ENCODE measurements at regions of chr2 and their contacts with region 1.

Region 1: DNA sequence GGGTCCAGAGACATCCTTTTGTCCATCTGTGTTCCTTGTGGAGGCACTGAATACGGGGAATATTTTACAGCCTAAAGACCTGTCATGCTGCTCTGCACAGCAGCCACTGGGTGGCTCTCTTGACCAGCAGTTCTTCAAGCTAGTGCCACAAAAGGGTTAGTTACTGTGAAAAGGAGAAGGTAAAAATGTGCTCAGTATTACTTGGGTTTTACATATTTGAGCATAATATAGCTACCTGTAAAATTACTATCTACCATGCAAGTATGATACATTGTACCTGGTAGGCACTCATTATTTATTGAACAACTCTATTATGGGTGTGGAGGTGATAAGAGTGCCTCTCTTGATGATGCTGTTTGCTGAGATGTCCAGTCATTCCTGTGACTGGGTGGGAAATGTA is 23.6 kb downstream of the FZD5 start:
- DNase-seq: peak in 6 of 9 experiments; percentile 9 to 67 (median 42)
- ATAC-seq: peak; percentile 67
- H3K4me3 ChIP-seq: no peak overlapping the region
- H3K4me3 Mint-ChIP-seq: no peak overlapping the region
- H3K27ac ChIP-seq: no peak overlapping the region
- H3K27ac Mint-ChIP-seq: no peak overlapping the region
- H3K4me1 ChIP-seq: no peaks in the 10 kb centered on the region
- H3K4me1 Mint-ChIP-seq: no peaks in the 10 kb centered on the region
- H3K27me3 ChIP-seq: no peaks in the 10 kb centered on the region
- H3K27me3 Mint-ChIP-seq: no peaks in the 10 kb centered on the region
- CTCF ChIP-seq: peak; percentile 70

Region 2: GRCh38 chr2:207819839-207820784 is 74.0 kb after region 1 on chr2:
- CTCF ChIA-PET with region 1: no interaction called
- POLR2A ChIA-PET with region 1: no interaction called
- intact Hi-C with region 1: no loop called
- DNase-seq: no peak
- ATAC-seq: no peak
- H3K4me3 ChIP-seq: no peak overlapping the region
- H3K4me3 Mint-ChIP-seq: no peak overlapping the region
- H3K27ac ChIP-seq: no peak overlapping the region
- H3K27ac Mint-ChIP-seq: no peak overlapping the region
- H3K4me1 ChIP-seq: no peaks in the 10 kb centered on the region
- H3K4me1 Mint-ChIP-seq: no peaks in the 10 kb centered on the region
- H3K27me3 ChIP-seq: no peaks in the 10 kb centered on the region
- H3K27me3 Mint-ChIP-seq: no peaks in the 10 kb centered on the region
- CTCF ChIP-seq: no peak

Region 3: DNA sequence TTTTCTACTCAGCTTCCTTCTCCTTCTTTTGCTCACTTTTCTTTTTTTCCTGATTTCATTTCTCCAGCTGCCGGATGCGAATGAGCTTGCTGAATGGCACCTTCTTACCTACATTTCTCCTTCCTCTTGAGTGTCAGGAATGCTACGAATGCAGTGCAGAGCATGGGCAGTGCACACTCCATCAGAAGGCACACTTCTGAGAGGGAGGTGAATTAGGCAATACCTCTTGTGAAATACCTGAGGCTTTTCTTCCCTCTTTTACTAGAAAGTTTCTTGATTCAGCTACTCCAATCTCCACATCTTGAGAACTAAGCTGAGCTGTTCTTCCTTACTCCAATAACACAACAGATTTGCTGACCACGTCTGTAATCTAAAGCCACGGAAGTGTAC is 228.1 kb after region 1 on chr2:
- CTCF ChIA-PET with region 1: interaction called, 15 read pairs
- POLR2A ChIA-PET with region 1: no interaction called
- intact Hi-C with region 1: loop called (anchors 2 to 5 kb)
- DNase-seq: no peak
- ATAC-seq: no peak
- H3K4me3 ChIP-seq: no peak overlapping the region
- H3K4me3 Mint-ChIP-seq: no peak overlapping the region
- H3K27ac ChIP-seq: no peak overlapping the region
- H3K27ac Mint-ChIP-seq: no peak overlapping the region
- H3K4me1 ChIP-seq: peaks cover 4% of the 10 kb centered on the region
- H3K4me1 Mint-ChIP-seq: peaks cover 26% of the 10 kb centered on the region
- H3K27me3 ChIP-seq: no peaks in the 10 kb centered on the region
- H3K27me3 Mint-ChIP-seq: no peaks in the 10 kb centered on the region
- CTCF ChIP-seq: no peak

Region 4: GRCh38 chr2:208025037-208025813 is 279.1 kb after region 1 on chr2 and contains the start of gene PLEKHM3:
- CTCF ChIA-PET with region 1: interaction called, 10 read pairs
- POLR2A ChIA-PET with region 1: no interaction called
- intact Hi-C with region 1: no loop called
- DNase-seq: peak; percentile 53 to 90 (median 71)
- ATAC-seq: peak; percentile 76
- H3K4me3 ChIP-seq: peak within 1 kb of the TSS; percentile 79 to 80
- H3K4me3 Mint-ChIP-seq: peak within 1 kb of the TSS; percentile 98
- H3K27ac ChIP-seq: peak within 1 kb of the TSS; percentile 64 to 67
- H3K27ac Mint-ChIP-seq: peak within 1 kb of the TSS; percentile 95
- H3K4me1 ChIP-seq: peaks cover 6% of the 10 kb centered on the region
- H3K4me1 Mint-ChIP-seq: peaks cover 30% of the 10 kb centered on the region
- H3K27me3 ChIP-seq: no peaks in the 10 kb centered on the region
- H3K27me3 Mint-ChIP-seq: no peaks in the 10 kb centered on the region
- CTCF ChIP-seq: no peak
- total RNA-seq, gene PLEKHM3: 10.9 to 11.3 TPM

Measured in CD8-positive, alpha-beta T cell (primary cell).